ENCODE measurements at regions of chr3 and their contacts with region 1.

Region 1: DNA sequence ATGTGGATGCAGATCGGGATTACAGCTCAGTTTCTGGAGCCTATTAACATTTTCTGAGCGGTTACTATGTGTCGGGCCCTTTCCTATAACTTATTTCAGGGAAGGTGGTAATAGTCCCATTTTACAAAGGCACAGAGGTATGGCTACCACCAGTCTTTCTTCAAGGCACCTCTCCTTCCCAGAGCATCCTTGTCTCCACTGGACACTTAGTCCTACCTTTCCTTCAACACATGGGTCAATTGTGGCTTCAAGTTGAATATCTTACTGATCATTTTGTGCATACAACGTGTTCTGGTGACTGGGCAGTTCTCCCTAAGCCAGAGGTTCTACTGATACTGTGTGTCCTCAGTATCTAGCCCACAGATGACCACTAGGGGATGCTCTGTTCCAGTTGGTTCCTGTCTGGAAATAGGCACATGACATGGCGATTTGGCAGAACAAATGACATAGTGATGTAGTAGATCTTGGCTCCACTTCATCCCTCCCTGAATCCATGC is 60.7 kb upstream of the CMTM8 start:
- DNase-seq: no peak
- ATAC-seq: peak; percentile 88

Region 2: DNA sequence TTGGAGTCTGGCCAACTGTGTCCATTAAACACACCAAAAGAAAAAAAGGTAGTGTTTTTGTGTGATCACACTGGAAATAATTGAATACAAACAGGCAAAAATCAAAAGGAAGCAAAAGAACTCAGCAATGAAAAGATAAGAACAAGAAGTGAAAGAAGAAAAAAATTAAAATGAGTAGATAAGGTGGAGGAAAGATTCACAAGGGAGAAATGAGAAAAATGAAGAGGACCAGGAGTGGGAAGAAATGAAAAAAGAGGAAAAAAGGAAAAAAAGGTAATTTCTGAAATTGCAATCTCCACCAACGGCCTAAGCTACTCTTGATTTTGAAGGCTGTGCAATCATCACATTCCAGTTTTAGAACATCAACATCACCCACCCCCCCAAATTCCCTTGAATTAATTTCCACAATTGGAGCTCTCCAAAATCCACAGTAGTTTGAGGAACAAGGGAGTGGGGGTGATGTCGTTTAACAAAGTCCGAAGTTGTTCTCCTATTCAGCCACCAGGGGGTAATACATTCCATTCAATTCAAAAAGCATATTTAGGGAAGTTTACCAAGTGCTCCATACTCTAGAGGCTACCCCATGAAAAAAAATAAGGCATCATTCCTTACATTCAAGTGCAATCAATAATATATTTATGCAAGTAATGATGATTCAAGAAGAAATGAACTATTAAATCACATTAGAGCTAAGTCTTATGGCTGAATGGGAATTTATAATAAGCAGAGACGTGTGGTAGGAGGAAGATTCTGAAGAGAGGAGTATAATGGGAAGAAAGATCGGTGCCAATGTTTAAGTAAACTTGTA is 158.8 kb before region 1 on chr3:
- intact Hi-C with region 1: no loop called
- DNase-seq: no peak
- ATAC-seq: peak; percentile 78

Region 3: GRCh38 chr3:32082721-32083120 is 95.0 kb before region 1 on chr3:
- intact Hi-C with region 1: no loop called
- DNase-seq: no peak
- ATAC-seq: no peak

Region 4: GRCh38 chr3:32238453-32239306 is 60.9 kb after region 1 on chr3 and contains the start of gene CMTM8:
- intact Hi-C with region 1: loop called (anchors 1 kb)
- DNase-seq: peak; percentile 80
- ATAC-seq: peak; percentile 78
- total RNA-seq, gene CMTM8: 6.3 TPM

Region 5: DNA sequence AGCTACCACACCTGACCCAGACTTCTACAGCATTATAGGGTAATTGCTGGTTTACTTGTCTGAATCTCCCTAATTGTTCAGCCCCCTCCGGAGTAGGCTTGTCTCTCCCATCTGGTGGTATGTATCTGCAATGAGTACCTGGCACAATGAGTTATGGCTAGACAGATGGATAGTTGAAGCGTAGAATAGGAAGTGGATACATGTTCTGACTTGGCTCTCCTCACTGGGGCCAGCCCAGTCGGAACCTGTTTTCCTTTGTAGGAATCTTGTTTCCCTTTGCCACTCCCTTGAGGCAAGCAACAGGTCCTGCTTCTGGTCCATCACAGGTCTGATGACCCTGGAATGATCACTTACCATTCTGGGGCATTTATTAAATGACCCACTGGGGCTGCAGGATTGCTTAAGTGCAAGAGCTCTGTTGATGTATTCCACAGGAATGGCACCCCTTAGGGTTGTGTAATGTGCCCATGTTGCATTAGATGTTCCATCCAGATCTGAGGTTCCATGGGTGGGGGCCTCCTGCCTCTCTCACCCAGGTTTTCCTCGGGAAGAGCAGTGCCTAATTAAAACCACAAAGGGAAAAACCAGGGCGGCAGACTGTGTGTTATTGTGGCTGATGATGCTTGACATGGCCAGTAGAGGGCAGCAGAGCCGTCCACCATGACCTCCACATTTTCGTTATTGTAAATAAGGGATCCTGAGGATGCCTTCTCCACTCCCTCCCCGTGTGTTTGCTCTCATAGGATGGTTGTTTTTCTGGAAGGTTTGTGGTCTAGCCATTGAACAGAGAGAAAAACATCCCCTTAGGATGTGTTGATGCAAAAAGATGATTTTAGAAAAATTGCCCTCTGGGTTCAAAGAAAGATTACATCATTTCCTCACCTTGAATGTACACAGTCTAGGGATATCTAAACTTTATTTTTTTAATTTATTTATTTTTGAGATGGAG is 118.8 kb after region 1 on chr3:
- intact Hi-C with region 1: loop called (anchors 5 kb)
- DNase-seq: no peak
- ATAC-seq: peak; percentile 81

Region 6: DNA sequence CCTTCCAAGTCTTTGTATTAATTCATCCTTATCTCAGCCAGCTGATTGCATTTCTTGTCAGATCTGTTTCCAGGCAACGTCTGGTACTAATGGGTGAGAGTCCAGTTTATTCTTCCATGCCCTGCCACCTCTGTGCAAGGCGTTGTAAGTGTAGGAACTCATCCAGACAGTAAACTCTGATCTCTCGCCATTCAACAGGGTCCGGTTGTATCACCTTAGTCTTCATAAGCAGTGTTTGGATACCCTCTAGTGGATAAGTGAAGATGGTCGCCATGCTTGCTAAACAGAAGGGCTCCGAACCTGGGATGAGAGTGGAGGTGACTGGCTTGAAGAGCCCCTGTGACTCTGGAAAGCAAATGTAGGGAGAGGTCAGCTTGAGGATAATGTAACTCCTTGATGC is 162.3 kb after region 1 on chr3:
- intact Hi-C with region 1: loop called (anchors 2 kb)
- DNase-seq: no peak
- ATAC-seq: peak; percentile 73

Region 7: GRCh38 chr3:32401556-32402081 is 223.9 kb after region 1 on chr3:
- intact Hi-C with region 1: loop called (anchors 5 kb)
- DNase-seq: peak; percentile 93
- ATAC-seq: peak; percentile 92

Region 8: DNA sequence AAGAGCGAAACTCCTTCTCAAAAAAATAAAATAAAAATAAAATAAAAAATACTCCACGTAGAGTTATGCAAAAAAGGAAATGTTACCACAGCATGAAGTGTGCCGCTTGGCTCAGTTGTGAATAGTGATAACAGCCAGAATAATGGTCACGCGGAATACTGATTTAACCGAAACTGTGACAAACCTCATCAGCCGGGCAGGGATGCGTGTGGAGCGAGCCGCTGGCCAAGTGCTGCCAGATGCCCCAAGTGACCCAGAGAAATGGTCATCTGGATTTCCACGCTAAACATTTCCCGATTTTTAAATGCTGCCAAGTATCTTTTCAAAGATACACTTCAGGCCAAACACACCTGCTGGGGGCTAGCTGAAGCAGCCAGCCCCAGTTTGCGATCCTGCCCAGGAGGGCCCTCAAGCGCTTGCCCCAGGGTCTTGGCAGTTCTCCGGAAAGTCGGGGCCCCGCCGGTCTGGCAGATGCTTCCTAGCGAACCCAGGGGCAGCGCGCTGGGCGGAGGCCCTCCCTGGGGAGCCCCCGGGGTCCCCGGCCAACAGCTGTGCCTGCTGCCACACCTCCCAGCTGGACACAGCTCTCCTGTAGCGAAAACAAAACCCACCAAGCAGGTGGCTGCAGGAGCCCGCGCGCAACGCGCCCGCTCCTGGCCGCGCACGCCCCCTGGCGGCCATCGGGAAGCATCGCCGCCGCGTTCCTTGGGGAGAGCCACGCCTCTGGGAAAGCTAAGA is 289.8 kb after region 1 on chr3:
- intact Hi-C with region 1: loop called (anchors 10 kb)
- DNase-seq: peak; percentile 91
- ATAC-seq: peak; percentile 94

Measured in Right ventricle myocardium inferior (tissue), 1 donor.